Vagina (tissue), 2 donors: ENCODE measurements at regions of chr1 and their contacts with region 1.

Region 1: GRCh38 chr1:215797859-215798258 is 230.8 kb downstream of the KCTD3 start:
- DNase-seq: no peak
- H3K4me3 ChIP-seq: no peak overlapping the region
- H3K27ac ChIP-seq: no peak overlapping the region
- H3K4me1 ChIP-seq: no peaks in the 10 kb centered on the region
- H3K27me3 ChIP-seq: no peaks in the 10 kb centered on the region
- CTCF ChIP-seq: no peak
- POLR2A ChIP-seq: no peak

Region 2: DNA sequence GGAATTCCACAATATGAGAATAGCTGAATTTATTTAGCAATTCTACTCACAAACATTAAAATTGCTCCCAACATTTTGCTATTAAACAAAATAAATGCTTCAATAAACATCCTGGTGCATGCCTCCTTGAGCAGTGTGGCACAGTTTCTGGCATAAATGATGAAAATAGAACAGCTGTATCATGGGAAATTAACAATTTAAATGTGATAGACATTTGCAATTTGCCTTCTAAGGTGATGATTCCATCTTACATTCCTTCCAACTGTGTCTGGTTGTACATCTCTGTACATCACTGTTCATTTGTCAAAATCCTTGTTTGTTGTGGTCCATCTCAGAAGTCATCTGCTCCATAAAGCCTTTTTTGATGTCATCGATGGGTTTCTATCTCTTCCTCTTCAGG is 32.0 kb before region 1 on chr1:
- intact Hi-C with region 1: loop called (anchors 1 kb)
- DNase-seq: no peak
- H3K4me3 ChIP-seq: no peak overlapping the region
- H3K27ac ChIP-seq: no peak overlapping the region
- H3K4me1 ChIP-seq: no peaks in the 10 kb centered on the region
- H3K27me3 ChIP-seq: no peaks in the 10 kb centered on the region
- CTCF ChIP-seq: no peak
- POLR2A ChIP-seq: no peak